Dorsolateral prefrontal cortex (tissue), 120 donors: ENCODE measurements at regions of chr11 and their contacts with region 1.

Region 1: GRCh38 chr11:121451986-121452608 is at the start of gene SORL1:
- DNase-seq: peak; percentile 70 to 87 (median 76)
- H3K4me3 ChIP-seq: peak within 1 kb of the TSS; percentile 49 to 96 (median 84)
- H3K27ac ChIP-seq: peak within 1 kb of the TSS in 58 of 59 donors; percentile 44 to 98 (median 90)
- H3K27me3 ChIP-seq: no peaks in the 10 kb centered on the region
- CTCF ChIP-seq: peak in 53 of 56 donors; percentile 16 to 75 (median 54)
- total RNA-seq, gene SORL1: 181 to 321 (median 250) TPM

Region 2: GRCh38 chr11:121321614-121322243 is 130.4 kb before region 1 on chr11:
- intact Hi-C with region 1: loop called (anchors 5 kb)
- DNase-seq: peak; percentile 36 to 86 (median 70)
- H3K4me3 ChIP-seq: no peak overlapping the region
- H3K27ac ChIP-seq: no peak overlapping the region
- H3K27me3 ChIP-seq: no peaks in the 10 kb centered on the region
- CTCF ChIP-seq: peak; percentile 30 to 94 (median 76)

Region 3: GRCh38 chr11:121431820-121432526 is 20.1 kb before region 1 on chr11:
- intact Hi-C with region 1: loop called in 1 of 2 experiments (anchors 2 kb)
- DNase-seq: no peak
- H3K4me3 ChIP-seq: no peak overlapping the region
- H3K27ac ChIP-seq: no peak overlapping the region
- H3K27me3 ChIP-seq: no peaks in the 10 kb centered on the region
- CTCF ChIP-seq: no peak

Region 4: GRCh38 chr11:121520243-121521144 is 68.4 kb after region 1 on chr11:
- intact Hi-C with region 1: loop called in 1 of 2 experiments (anchors 5 kb)
- DNase-seq: no peak
- H3K4me3 ChIP-seq: no peak overlapping the region
- H3K27ac ChIP-seq: peak overlapping the region in 19 of 59 donors; percentile 1 to 76 (median 30)
- H3K27me3 ChIP-seq: no peaks in the 10 kb centered on the region
- CTCF ChIP-seq: no peak

Region 5: DNA sequence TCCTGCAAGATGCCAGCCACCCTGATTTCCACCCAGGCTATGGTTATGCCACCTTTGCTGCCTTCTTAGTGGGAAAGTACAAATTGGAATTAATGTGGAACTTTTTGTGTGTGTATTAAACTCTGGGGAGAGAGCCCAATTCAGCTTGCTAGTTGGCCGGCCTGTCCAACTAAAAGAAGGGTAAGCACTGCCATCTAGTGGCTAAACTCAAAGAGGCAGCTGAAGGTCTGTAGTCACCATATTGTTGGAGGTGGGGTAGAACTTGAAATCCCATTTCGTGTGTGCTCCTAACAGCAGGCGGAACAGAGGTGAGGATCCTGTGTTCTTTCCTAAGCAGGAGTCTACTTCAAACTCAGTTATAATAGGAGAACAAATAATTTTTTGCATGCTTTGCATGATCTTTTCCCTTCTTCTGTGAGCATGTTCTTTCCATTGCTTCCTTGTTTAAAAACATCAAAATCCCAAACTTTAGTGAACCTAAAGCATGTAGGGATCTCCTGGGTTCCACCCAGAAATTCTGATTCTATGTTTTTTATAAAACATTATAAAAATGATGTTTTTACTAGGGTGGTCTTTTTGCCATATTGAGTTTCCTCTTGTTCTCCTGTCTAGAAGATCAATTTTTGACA is 139.4 kb after region 1 on chr11:
- intact Hi-C with region 1: loop called (anchors 5 kb)
- DNase-seq: peak in 6 of 10 donors; percentile 59 to 81 (median 68)
- H3K4me3 ChIP-seq: no peak overlapping the region
- H3K27ac ChIP-seq: peak overlapping the region in 52 of 59 donors; percentile 1 to 84 (median 62)
- H3K27me3 ChIP-seq: no peaks in the 10 kb centered on the region
- CTCF ChIP-seq: peak; percentile 81 to 96 (median 93)